ENCODE measurements at regions of chr15 and their contacts with region 1.

Region 1: GRCh38 chr15:64387562-64388168 is at the start of gene TRIP4:
- DNase-seq: peak; percentile 94 to 95
- ATAC-seq: peak; percentile 99 to 100 (median 100)
- H3K4me3 ChIP-seq: peak within 1 kb of the TSS; percentile 57 to 88 (median 73)
- H3K27ac ChIP-seq: peak within 1 kb of the TSS; percentile 5 to 87 (median 82)
- H3K4me1 ChIP-seq: peaks cover 0 to 22% (median 14%) of the 10 kb centered on the region in 9 donors
- H3K27me3 ChIP-seq: no peaks in the 10 kb centered on the region
- CTCF ChIP-seq: peak in 4 of 9 donors; percentile 21 to 34 (median 27)
- total RNA-seq, gene TRIP4: 15.3 to 20.0 (median 17.4) TPM

Region 2: DNA sequence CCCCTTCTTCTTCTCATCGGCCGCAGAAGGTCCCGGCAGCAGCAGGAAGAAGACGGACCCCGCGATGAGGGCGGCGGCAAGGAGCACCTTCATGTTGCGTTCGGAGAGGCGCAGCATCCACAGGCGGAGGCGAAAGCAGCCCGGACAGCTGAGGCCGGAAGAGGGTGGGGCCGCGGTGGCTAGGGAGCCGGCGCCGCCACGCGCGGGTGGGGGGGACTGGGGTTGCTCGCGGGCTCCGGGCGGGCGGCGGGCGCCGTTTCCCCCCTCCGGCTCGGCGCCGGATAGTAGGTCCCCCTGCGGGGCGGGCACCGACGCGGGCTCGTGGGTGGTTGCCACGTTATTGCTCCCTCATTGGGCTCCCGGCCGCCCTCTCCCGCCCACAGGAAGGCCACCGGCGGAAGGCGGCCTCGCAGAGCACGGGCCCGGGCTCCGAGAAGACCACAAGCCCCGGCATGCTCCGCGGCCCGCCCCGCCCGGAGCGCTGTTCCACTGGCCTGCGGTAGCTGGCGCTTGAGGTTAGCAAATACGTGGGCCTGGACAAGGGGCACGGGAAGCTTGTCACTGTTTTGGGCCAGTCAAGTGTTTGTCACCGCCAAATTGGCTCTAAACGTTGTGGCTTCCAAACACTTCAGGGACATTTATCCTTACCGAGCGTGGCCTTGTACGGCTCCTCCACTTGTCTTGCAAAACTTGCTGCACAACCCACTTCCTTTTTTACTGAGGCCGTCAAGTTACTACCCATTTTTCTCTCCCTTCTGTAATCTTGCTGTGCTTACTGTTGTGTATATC is 224.6 kb before region 1 on chr15 and contains the start of gene PPIB:
- intact Hi-C with region 1: loop called in 1 of 10 experiments (anchors 10 kb)
- DNase-seq: peak; percentile 97 to 99
- ATAC-seq: peak; percentile 95 to 98 (median 97)
- H3K4me3 ChIP-seq: peak within 1 kb of the TSS; percentile 51 to 95 (median 92)
- H3K27ac ChIP-seq: peak within 1 kb of the TSS; percentile 78 to 95 (median 90)
- H3K4me1 ChIP-seq: peaks cover 27 to 56% (median 51%) of the 10 kb centered on the region in 9 donors
- H3K27me3 ChIP-seq: no peaks in the 10 kb centered on the region
- CTCF ChIP-seq: peak in 8 of 9 donors; percentile 39 to 68 (median 48)
- total RNA-seq, gene PPIB: 60.3 to 178 (median 83.7) TPM

Region 3: GRCh38 chr15:64209680-64210334 is 177.9 kb before region 1 on chr15:
- intact Hi-C with region 1: loop called in 1 of 10 experiments (anchors 10 kb)
- DNase-seq: no peak
- ATAC-seq: no peak
- H3K4me3 ChIP-seq: no peak overlapping the region
- H3K27ac ChIP-seq: no peak overlapping the region
- H3K4me1 ChIP-seq: no peaks in the 10 kb centered on the region
- H3K27me3 ChIP-seq: no peaks in the 10 kb centered on the region
- CTCF ChIP-seq: peak in 8 of 9 donors; percentile 4 to 68 (median 48)

Measured in heart right ventricle (tissue), 16 donors.